Activated CD4-positive, alpha-beta T cell treated with anti-CD3 and anti-CD28 coated beads, Interleukin-2, amount 10 ng/mL, durations not matched to agents 7 days and 5 days (primary cell): ENCODE measurements at regions of chr2 and their contacts with region 1.

Region 1: DNA sequence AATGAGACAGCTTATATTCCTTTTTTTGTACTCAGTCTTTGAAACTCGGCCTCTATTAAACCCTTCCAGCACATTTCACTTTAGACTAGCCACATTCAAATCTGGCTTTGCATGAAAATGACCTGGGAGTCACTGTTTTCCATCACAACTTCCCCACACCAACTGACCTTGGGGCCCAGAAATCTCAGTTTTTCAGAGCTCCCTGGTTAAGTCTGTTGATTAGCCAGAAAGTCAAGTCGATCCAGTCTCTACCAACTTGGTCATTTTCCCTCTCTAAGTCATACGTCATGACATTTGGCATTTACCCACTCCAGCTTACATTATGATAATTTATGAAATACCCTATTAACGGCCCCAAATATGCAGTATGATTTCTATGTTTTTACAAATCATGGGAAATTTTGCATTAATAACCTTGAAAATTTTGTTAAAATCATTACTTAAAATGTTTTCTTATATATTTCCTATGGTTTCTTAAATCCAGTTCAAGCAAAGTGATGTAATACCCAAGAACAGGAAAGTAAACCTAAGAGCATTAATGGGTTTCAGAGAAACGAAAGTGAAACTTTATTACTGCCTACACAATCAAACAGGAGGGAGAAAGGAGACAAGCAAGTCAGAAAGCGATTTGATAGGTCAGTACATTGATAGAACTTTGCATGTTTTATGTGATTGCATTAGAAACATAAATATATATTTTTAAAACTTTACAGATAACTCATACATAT is 77.1 kb downstream of the SPATS2L start:
- DNase-seq: no peak
- H3K4me3 Mint-ChIP-seq: peak overlapping the region; percentile 54
- H3K27ac Mint-ChIP-seq: peak overlapping the region; percentile 97
- H3K4me1 Mint-ChIP-seq: peaks cover 58% of the 10 kb centered on the region
- H3K27me3 Mint-ChIP-seq: no peaks in the 10 kb centered on the region

Region 2: DNA sequence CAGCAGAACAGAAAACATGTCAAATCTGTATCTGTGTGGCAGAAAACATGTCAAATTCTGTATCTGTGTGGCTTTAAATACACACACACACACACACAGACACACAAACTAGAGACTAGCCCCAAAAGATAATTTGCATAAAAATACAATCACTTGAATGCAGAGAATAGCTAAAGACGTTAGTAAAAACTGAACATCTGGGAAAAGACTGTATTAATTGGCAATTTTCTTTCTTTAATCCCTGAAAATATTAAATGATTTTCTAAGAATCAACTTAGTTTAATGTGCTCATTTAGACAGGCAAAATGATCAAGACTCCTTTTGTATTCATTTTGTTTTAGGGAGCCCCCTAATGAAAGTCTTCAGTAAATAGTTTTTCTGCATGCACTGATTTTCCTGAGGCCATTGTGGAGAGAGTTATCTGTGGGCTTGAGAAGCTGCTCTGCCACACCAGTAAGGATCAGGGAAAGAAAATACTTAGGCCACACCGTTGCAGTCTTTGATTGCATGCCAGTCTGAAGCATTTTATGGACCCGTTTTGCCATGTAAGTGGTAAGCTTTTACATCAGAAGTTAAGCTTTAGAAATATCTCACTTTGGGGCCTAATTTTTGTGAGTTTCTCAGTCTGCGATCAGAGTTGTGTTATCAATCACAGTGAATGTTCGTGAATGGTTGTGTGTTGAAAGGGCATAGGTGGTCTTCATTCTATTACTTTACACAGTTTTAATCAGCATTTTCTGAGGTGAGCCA is 74.8 kb before region 1 on chr2:
- CTCF ChIA-PET with region 1: no interaction called
- POLR2A ChIA-PET with region 1: interaction called, 11 read pairs
- DNase-seq: no peak
- H3K4me3 Mint-ChIP-seq: peak overlapping the region; percentile 17
- H3K27ac Mint-ChIP-seq: no peak overlapping the region
- H3K4me1 Mint-ChIP-seq: peaks cover 32% of the 10 kb centered on the region
- H3K27me3 Mint-ChIP-seq: peaks cover 6% of the 10 kb centered on the region

Region 3: DNA sequence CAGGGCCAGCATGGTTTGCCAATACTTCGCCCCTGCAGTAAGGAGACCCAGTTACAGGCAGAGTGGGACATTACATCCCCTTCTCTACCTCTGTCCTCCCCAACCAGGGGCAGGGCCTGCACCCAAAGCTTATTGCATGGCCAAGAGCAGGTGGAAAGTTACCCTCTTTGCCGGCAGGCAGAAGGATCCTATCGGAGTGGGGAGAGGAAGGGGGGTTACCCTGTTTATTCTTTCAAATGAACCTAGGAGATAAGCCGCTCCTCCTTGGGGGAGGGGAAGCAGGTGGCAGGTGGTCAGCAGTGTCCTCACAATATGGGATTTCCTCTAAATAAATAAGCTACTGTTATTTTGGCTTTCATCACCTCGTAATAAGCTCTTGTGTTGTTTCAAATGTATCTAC is 23.2 kb before region 1 on chr2:
- CTCF ChIA-PET with region 1: no interaction called
- POLR2A ChIA-PET with region 1: no interaction called
- DNase-seq: no peak
- H3K4me3 Mint-ChIP-seq: no peak overlapping the region
- H3K27ac Mint-ChIP-seq: no peak overlapping the region
- H3K4me1 Mint-ChIP-seq: no peaks in the 10 kb centered on the region
- H3K27me3 Mint-ChIP-seq: no peaks in the 10 kb centered on the region